HepG2 (cell line): ENCODE measurements at regions of chr10 and their contacts with region 1.

Region 1: DNA sequence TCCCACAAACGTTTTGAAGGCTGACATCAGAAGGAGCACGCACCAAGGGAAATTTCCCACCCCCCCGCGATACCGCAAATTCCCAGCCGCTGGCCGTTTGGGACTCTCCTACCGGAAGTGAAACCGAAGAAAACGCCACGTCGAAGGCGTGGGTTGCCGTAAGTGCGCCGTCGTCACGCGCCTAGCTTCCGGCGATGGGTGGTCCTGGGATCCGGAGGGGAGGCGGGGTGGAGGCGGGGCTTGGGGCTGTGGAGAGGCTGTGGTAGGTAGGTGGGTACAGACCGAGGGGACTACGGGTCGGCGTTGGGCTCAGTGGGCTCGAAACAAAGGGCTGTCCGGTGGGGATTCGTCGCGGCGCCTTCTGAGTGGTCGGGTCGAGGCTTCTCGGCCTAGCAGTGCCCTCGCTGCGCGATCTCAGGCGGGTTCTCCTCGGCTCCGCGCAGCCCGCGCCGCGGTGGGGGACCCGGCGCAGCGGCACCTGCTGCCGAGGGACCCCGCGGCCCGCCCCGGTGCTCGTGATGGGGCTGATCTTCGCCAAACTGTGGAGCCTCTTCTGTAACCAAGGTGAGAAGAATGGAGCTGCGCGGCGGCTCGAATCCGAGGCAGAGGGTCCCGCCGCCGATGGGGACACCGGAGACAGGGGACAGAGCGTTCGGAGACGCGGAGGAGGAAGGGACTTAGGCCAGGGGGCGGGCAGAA is at the start of gene ARL5B:
- DNase-seq: peak; percentile 95
- ATAC-seq: peak; percentile 97
- H3K4me3 ChIP-seq: peak within 1 kb of the TSS; percentile 90 to 96 (median 92)
- H3K27ac ChIP-seq: peak within 1 kb of the TSS; percentile 100
- H3K4me1 ChIP-seq: peaks cover 31% of the 10 kb centered on the region
- H3K27me3 ChIP-seq: no peaks in the 10 kb centered on the region; a peak in 1 of 5 replicates
- CTCF ChIP-seq: no peak; the same call in 1 of the 2 replicates
- EP300 ChIP-seq: peak in 1 of 2 experiments; percentile 44; a peak in 1 of 4 replicates
- POLR2A ChIP-seq: peak; percentile 81 to 90
- RAD21 ChIP-seq: peak; percentile 24
- total RNA-seq, gene ARL5B: 32.7 and 50.9 TPM in 2 replicates

Region 2: GRCh38 chr10:17655567-17656146 is 1003.6 kb before region 1 on chr10:
- CTCF ChIA-PET with region 1: no interaction called
- POLR2A ChIA-PET with region 1: no interaction called
- in situ Hi-C with region 1: loop called (anchors 25 kb)
- intact Hi-C with region 1: no loop called
- DNase-seq: peak; percentile 67
- ATAC-seq: peak; percentile 25; the same call in 2 of the 3 replicates
- H3K4me3 ChIP-seq: no peak overlapping the region
- H3K27ac ChIP-seq: peak overlapping the region; percentile 13
- H3K4me1 ChIP-seq: peaks cover 61% of the 10 kb centered on the region
- H3K27me3 ChIP-seq: no peaks in the 10 kb centered on the region
- CTCF ChIP-seq: no peak
- EP300 ChIP-seq: no peak
- POLR2A ChIP-seq: no peak
- RAD21 ChIP-seq: no peak

Region 3: GRCh38 chr10:17673456-17674061 is 985.7 kb before region 1 on chr10:
- CTCF ChIA-PET with region 1: no interaction called
- POLR2A ChIA-PET with region 1: no interaction called
- in situ Hi-C with region 1: loop called (anchors 25 kb)
- intact Hi-C with region 1: loop called (anchors 10 kb)
- DNase-seq: peak; percentile 91
- ATAC-seq: peak; percentile 96
- H3K4me3 ChIP-seq: no peak overlapping the region
- H3K27ac ChIP-seq: peak overlapping the region; percentile 54
- H3K4me1 ChIP-seq: peaks cover 66% of the 10 kb centered on the region
- H3K27me3 ChIP-seq: no peaks in the 10 kb centered on the region
- CTCF ChIP-seq: no peak
- EP300 ChIP-seq: peak in 1 of 2 experiments; percentile 81; a peak in 2 of 4 replicates
- POLR2A ChIP-seq: no peak
- RAD21 ChIP-seq: no peak

Region 4: GRCh38 chr10:18583575-18584270 is 75.5 kb before region 1 on chr10:
- CTCF ChIA-PET with region 1: no interaction called
- POLR2A ChIA-PET with region 1: no interaction called
- in situ Hi-C with region 1: no loop called
- intact Hi-C with region 1: loop called (anchors 2 kb)
- DNase-seq: no peak
- ATAC-seq: no peak
- H3K4me3 ChIP-seq: no peak overlapping the region
- H3K27ac ChIP-seq: no peak overlapping the region
- H3K4me1 ChIP-seq: no peaks in the 10 kb centered on the region
- H3K27me3 ChIP-seq: no peaks in the 10 kb centered on the region
- CTCF ChIP-seq: no peak
- EP300 ChIP-seq: no peak
- POLR2A ChIP-seq: no peak
- RAD21 ChIP-seq: no peak

Region 5: DNA sequence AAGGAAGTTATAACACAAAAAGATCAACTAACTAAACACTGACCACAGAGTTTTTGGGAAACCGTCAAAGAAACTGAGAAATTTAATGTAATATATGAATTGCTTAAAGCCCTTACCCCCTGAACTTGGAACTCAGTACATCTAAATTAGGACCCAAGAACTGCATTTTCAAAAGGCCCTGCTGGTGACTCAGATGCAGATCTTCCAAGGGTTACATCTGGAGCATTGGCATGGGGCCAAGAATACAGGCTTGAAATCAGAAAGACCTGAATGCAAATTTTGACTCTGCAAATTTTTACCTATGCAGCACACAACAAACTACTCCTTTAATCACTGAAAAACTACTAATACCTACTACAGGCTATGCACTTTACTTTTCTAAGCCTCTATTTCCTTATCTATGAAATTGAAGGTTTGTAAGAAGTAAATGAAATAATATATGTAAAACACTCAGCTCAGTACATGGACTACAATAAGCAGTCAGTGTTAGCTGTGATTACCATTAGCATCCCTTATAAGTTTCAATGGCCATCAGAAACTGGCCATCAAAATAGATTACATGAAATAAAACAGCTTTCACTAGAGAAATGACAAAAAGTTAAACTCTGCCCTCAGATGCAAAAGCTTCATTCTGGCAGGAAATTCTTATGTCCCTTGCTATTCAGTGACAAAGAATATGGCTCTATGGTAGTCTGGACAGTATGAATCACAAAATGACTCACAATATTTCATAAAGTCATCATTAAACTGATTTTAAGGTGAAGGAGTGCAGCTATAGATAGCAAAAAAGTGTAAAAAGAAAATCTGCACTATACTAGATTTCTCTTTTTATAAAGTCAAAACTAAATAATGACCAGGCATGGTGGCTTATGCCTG is 51.5 kb before region 1 on chr10:
- CTCF ChIA-PET with region 1: no interaction called
- POLR2A ChIA-PET with region 1: interaction called, 15 read pairs
- in situ Hi-C with region 1: no loop called
- intact Hi-C with region 1: loop called (anchors 1 kb)
- DNase-seq: peak; percentile 37
- ATAC-seq: no peak
- H3K4me3 ChIP-seq: no peak overlapping the region
- H3K27ac ChIP-seq: no peak overlapping the region
- H3K4me1 ChIP-seq: peaks cover 63% of the 10 kb centered on the region
- H3K27me3 ChIP-seq: no peaks in the 10 kb centered on the region
- CTCF ChIP-seq: no peak
- EP300 ChIP-seq: no peak
- POLR2A ChIP-seq: no peak
- RAD21 ChIP-seq: no peak

Region 6: DNA sequence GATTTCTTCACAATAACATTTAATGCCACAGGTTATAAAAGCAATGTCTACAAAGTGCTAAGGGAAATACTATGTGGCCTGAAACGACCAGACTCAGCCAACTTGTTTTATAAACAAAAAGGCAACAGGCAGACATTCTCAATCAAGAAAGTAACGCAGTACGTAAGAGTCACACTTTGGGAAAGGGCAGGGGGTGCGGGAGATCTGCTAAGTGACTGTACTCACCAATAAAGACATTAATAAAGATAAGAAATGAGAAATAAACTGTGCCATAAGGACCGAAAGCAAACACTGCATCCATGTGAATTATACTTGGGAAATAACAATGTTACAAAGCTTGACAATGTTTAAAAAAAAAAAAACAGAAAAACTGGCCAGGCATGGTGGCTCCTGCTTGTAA is 33.4 kb before region 1 on chr10:
- CTCF ChIA-PET with region 1: no interaction called
- POLR2A ChIA-PET with region 1: interaction called, 17 read pairs
- in situ Hi-C with region 1: no loop called
- intact Hi-C with region 1: no loop called
- DNase-seq: no peak
- ATAC-seq: no peak
- H3K4me3 ChIP-seq: no peak overlapping the region
- H3K27ac ChIP-seq: no peak overlapping the region
- H3K4me1 ChIP-seq: peaks cover 32% of the 10 kb centered on the region
- H3K27me3 ChIP-seq: no peaks in the 10 kb centered on the region
- CTCF ChIP-seq: no peak
- EP300 ChIP-seq: no peak
- POLR2A ChIP-seq: no peak
- RAD21 ChIP-seq: no peak

Region 7: DNA sequence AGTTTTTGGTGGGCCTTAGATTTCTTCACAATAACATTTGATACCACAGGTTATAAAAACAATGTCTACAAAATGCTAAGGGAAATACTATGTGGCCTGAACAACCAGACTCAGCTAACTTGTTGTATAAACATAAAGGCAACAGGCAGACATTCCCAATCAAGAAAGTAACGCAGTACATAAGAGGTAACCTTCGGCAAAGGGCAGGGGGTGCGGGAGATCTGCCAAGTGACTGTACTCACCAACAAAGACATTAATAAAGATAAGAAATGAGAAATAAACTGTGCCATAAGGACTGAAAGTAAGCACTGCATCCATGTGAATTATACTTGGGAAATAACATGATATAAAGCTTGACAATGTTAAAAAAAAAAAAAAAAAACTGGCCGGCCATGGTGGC is 23.3 kb before region 1 on chr10:
- CTCF ChIA-PET with region 1: no interaction called
- POLR2A ChIA-PET with region 1: interaction called, 21 read pairs
- in situ Hi-C with region 1: no loop called
- intact Hi-C with region 1: no loop called
- DNase-seq: no peak
- ATAC-seq: no peak
- H3K4me3 ChIP-seq: no peak overlapping the region
- H3K27ac ChIP-seq: peak overlapping the region; percentile 18
- H3K4me1 ChIP-seq: peaks cover 63% of the 10 kb centered on the region
- H3K27me3 ChIP-seq: no peaks in the 10 kb centered on the region
- CTCF ChIP-seq: no peak
- EP300 ChIP-seq: no peak
- POLR2A ChIP-seq: no peak
- RAD21 ChIP-seq: no peak